HEK293T (cell line): ENCODE measurements at regions of chr2 and their contacts with region 1.

Region 1: GRCh38 chr2:133844214-133844892 is 276.1 kb upstream of the NCKAP5 start:
- DNase-seq: peak; percentile 80

Region 2: GRCh38 chr2:133680343-133681049 is 163.9 kb before region 1 on chr2:
- CTCF ChIA-PET with region 1: no interaction called
- POLR2A ChIA-PET with region 1: no interaction called
- DNase-seq: no peak

Region 3: GRCh38 chr2:133833746-133834145 is 10.6 kb before region 1 on chr2:
- CTCF ChIA-PET with region 1: interaction called, 11 read pairs
- POLR2A ChIA-PET with region 1: no interaction called
- DNase-seq: no peak